Heart left ventricle (tissue), 16 donors: ENCODE measurements at regions of chr9 and their contacts with region 1.

Region 1: DNA sequence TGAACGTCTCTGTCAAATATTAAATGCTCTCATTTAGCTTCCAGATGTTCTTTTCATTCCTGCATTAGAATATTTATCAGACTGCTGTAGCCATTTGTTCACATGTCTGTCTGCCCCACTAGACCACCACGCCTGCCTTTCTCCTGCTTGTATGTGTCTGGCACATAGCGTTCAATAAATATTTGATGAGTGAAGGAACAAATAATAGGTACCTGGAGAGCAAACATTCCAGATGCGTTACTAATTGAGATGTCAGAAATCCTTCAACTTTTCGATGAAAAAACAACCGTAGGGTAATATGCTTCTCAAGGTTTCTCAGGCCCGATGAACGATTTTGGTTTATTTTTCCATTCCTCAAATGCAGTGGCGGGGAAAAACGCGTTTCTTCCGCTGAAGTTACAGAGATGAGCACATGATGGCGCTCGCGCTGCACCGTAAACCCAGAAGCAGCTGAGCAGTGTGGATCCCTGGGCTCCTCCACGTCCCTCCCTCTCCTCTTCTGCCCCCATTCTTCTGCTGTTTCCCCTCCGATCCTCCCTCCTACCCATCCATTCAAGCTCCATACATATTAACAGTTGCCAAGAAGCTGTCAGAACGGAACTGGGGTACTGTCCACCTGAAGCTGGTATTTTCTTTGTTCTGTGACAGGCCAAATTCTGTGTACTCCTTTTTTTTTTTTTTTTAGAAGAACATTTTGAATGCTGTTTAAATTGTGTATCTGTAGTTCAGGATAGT is 245.4 kb downstream of the MPDZ start:
- DNase-seq: peak; percentile 36 to 59 (median 53)
- ATAC-seq: peak; percentile 77 to 94 (median 88)
- H3K4me3 ChIP-seq: peak overlapping the region in 9 of 12 donors; percentile 11 to 49 (median 26)
- H3K27ac ChIP-seq: no peak overlapping the region
- H3K4me1 ChIP-seq: peaks cover 0 to 6% (median 0%) of the 10 kb centered on the region in 12 donors
- H3K27me3 ChIP-seq: no peaks in the 10 kb centered on the region
- CTCF ChIP-seq: peak; percentile 54 to 81 (median 72)
- POLR2A ChIP-seq: no peak

Region 2: GRCh38 chr9:13088720-13089427 is 54.7 kb after region 1 on chr9:
- intact Hi-C with region 1: loop called in 9 of 10 experiments (anchors 1 to 5 kb)
- DNase-seq: no peak
- ATAC-seq: peak in 1 of 4 donors; percentile 61
- H3K4me3 ChIP-seq: no peak overlapping the region
- H3K27ac ChIP-seq: no peak overlapping the region
- H3K4me1 ChIP-seq: peaks cover 0 to 7% (median 0%) of the 10 kb centered on the region in 12 donors
- H3K27me3 ChIP-seq: no peaks in the 10 kb centered on the region
- CTCF ChIP-seq: peak; percentile 66 to 82 (median 74)
- POLR2A ChIP-seq: no peak

Region 3: DNA sequence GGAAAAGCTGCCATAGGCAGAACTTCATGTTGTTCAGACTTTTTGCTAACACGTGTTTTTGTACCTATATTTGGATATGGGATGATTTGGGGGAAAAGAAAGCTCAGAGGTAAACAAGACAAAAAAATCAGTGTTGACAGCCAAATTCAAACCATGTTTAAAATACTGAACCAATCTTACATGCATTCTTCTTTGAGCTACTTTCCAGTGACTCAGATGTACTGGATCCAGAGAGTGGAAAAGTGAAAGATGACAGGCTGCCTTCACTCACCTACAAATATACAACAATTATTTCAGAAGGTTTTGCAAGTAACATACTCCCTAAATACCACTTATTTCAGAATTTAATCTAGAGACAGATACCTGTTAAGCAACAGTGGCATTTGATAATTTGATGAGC is 79.6 kb after region 1 on chr9:
- intact Hi-C with region 1: no loop called
- DNase-seq: no peak
- ATAC-seq: no peak
- H3K4me3 ChIP-seq: no peak overlapping the region
- H3K27ac ChIP-seq: no peak overlapping the region
- H3K4me1 ChIP-seq: peaks cover 0 to 11% (median 0%) of the 10 kb centered on the region in 12 donors
- H3K27me3 ChIP-seq: no peaks in the 10 kb centered on the region
- CTCF ChIP-seq: no peak
- POLR2A ChIP-seq: no peak

Region 4: GRCh38 chr9:13165236-13165945 is 131.3 kb after region 1 on chr9:
- intact Hi-C with region 1: no loop called
- DNase-seq: no peak
- ATAC-seq: no peak
- H3K4me3 ChIP-seq: no peak overlapping the region
- H3K27ac ChIP-seq: no peak overlapping the region
- H3K4me1 ChIP-seq: no peaks in the 10 kb centered on the region
- H3K27me3 ChIP-seq: no peaks in the 10 kb centered on the region
- CTCF ChIP-seq: no peak
- POLR2A ChIP-seq: no peak

Region 5: DNA sequence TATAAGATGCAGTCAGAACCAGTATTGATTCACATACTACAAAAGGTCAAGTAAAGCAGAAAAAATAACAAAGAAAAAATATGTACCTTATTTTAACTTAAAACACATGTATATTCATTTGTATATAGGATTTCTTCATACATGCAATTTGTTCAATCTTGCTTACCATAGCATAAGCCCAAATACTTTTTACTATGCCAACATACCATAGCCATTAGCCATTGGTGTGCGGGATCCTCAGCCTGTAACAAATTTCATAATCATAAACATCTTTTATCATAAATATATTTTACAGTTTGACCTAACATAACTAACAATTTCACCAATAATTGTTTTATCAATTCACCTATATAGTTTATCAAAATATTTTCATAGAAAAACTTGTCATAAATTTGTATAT is 194.3 kb after region 1 on chr9:
- intact Hi-C with region 1: loop called in 1 of 10 experiments (anchors 5 kb)
- DNase-seq: no peak
- ATAC-seq: no peak
- H3K4me3 ChIP-seq: no peak overlapping the region
- H3K27ac ChIP-seq: no peak overlapping the region
- H3K4me1 ChIP-seq: no peaks in the 10 kb centered on the region
- H3K27me3 ChIP-seq: no peaks in the 10 kb centered on the region
- CTCF ChIP-seq: no peak
- POLR2A ChIP-seq: no peak

Region 6: GRCh38 chr9:14428781-14429230 is 1394.7 kb after region 1 on chr9:
- intact Hi-C with region 1: loop called in 3 of 10 experiments (anchors 10 kb)
- DNase-seq: peak; percentile 67 to 80 (median 74)
- ATAC-seq: peak; percentile 69 to 80 (median 76)
- H3K4me3 ChIP-seq: no peak overlapping the region
- H3K27ac ChIP-seq: peak overlapping the region in 7 of 12 donors; percentile 23 to 54 (median 37)
- H3K4me1 ChIP-seq: peaks cover 0 to 40% (median 17%) of the 10 kb centered on the region in 12 donors
- H3K27me3 ChIP-seq: no peaks in the 10 kb centered on the region
- CTCF ChIP-seq: peak; percentile 69 to 86 (median 80)
- POLR2A ChIP-seq: no peak

Region 7: DNA sequence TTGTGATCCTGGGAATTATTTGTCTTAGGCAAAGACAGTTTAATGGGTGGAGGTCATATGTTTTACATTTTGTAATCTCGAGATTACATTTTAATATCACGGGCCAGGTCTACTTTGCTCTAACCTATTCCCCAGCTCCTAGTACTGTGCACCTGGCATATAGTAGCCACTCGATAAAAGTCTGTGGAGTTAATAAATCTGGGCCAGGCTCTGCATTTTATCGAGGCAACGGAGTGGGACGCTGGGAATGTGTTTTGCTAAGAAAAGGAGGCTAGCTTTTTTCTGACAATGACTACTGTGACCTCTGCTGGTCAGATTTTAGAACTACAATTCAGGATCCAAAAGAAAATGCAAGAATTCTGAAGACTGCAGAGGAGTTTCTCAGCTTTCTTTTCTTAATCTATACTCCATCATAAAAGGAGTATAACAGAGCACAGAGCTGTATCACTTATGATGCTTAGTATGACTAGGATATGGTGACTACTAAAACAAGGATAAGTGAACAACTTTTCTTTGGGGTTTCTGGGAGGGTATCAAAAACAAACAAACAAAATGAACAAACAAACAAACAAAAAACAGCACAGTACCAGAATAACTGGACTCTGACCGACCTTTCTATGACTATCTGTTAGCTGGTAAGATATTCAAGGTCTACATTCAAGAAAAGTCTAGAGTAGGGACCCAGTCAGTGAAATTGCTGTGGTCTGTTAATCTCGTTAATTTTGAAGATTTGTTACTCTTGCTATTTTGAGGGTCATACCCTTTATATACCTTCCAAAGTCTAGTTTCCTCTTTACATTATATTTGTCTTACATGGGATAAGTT is 1734.5 kb after region 1 on chr9:
- intact Hi-C with region 1: loop called in 1 of 10 experiments (anchors 10 kb)
- DNase-seq: no peak
- ATAC-seq: peak in 3 of 4 donors; percentile 27 to 52 (median 42)
- H3K4me3 ChIP-seq: no peak overlapping the region
- H3K27ac ChIP-seq: no peak overlapping the region
- H3K4me1 ChIP-seq: peaks cover 0 to 4% (median 0%) of the 10 kb centered on the region in 12 donors
- H3K27me3 ChIP-seq: no peaks in the 10 kb centered on the region
- CTCF ChIP-seq: peak; percentile 64 to 83 (median 69)
- POLR2A ChIP-seq: no peak